ENCODE measurements at regions of chr17 and their contacts with region 1.

Region 1: GRCh38 chr17:50252781-50253180 is 21.5 kb upstream of the TMEM92 start:
- DNase-seq: no peak
- H3K4me3 ChIP-seq: no peak overlapping the region
- H3K27ac ChIP-seq: no peak overlapping the region
- H3K27me3 ChIP-seq: no peaks in the 10 kb centered on the region
- CTCF ChIP-seq: no peak

Region 2: GRCh38 chr17:50218771-50219315 is 33.9 kb before region 1 on chr17:
- in situ Hi-C with region 1: loop called (anchors 5 kb)
- DNase-seq: peak; percentile 98
- H3K4me3 ChIP-seq: no peak overlapping the region
- H3K27ac ChIP-seq: peak overlapping the region; percentile 99
- H3K27me3 ChIP-seq: no peaks in the 10 kb centered on the region
- CTCF ChIP-seq: no peak

Region 3: DNA sequence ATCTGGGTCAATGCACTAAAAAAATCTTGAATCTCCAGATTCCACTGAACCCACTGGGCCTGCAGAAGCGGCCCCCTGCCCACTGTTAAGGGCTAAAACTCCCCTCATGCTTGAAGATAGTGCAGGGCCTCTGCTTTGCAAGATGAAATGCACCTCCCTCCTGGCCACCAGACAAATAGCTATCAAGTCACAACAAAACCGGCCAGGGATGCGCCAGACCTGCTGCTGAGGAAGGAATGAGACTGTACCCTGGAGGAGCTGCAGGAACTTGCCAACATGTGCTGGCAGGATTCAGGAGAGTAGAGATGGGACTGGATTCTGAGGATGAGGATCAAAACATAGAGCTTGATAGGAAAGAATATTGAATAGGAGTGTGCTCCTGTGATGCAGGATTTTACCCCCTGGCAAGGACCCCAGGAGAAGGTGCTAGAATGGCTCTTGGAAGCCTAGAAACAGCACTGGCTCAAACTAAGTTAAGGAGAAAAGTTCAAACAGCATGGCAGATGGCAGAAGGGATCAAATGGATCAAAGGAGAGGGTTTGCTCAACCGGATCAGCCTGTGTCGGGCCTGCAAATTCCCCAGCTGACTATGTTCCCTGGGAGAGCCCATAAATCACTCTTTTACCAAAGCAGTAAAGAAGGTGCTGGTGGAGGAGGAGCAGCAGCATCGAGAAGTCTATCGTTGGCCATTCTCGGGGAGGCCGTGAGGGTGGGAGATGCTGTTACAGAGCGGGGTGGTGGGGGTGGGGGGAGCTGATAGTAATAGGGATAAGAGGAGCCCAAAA is 65.9 kb after region 1 on chr17:
- in situ Hi-C with region 1: no loop called
- DNase-seq: no peak
- H3K4me3 ChIP-seq: no peak overlapping the region
- H3K27ac ChIP-seq: no peak overlapping the region
- H3K27me3 ChIP-seq: no peaks in the 10 kb centered on the region
- CTCF ChIP-seq: no peak

Measured in brain microvascular endothelial cell (primary cell).